Cardiac septum (tissue), 1 donor: ENCODE measurements at regions of chr15 and their contacts with region 1.

Region 1: DNA sequence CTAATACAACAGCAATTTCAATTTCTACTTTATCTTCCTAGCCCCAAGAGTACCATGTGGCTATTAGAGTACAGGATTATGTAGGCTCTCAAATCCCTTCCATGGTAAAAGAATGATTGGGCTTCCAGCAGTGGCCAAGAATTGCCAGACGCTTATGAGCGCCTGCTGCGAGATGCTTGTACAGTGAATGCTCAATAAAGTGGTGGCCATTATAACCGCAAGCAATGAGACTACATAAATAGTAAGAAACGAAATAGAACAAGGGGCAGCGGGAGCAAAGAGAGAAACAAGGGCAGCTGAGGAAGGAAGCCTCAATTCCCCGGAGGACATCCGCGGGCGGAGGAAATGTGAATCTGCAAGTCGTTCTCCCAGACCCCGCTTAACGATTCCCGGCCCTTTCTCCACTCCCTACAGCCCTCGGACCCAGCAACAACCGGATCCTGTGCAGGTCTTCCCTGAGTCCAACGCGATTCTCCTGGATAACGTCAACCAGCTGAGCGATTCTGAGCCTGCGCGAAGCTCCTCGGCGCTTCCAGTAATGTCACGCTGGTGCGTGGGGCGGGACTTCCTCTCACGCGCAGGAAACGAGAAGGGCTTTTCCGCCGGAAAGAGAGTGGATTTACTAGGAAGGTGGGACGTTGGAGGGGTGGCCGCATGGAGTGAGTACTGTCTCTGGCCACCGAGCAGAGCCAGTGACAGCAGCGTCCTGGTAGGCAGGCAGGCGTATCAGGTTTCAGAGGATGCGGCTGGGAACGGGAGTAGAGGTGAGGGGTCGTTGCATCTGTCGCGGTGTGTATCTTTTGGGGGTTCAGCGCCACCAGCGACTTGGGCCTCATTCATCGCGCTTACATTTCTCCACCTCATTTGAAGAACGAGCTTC is 40.5 kb upstream of the AP3B2 start:
- DNase-seq: peak; percentile 96

Region 2: DNA sequence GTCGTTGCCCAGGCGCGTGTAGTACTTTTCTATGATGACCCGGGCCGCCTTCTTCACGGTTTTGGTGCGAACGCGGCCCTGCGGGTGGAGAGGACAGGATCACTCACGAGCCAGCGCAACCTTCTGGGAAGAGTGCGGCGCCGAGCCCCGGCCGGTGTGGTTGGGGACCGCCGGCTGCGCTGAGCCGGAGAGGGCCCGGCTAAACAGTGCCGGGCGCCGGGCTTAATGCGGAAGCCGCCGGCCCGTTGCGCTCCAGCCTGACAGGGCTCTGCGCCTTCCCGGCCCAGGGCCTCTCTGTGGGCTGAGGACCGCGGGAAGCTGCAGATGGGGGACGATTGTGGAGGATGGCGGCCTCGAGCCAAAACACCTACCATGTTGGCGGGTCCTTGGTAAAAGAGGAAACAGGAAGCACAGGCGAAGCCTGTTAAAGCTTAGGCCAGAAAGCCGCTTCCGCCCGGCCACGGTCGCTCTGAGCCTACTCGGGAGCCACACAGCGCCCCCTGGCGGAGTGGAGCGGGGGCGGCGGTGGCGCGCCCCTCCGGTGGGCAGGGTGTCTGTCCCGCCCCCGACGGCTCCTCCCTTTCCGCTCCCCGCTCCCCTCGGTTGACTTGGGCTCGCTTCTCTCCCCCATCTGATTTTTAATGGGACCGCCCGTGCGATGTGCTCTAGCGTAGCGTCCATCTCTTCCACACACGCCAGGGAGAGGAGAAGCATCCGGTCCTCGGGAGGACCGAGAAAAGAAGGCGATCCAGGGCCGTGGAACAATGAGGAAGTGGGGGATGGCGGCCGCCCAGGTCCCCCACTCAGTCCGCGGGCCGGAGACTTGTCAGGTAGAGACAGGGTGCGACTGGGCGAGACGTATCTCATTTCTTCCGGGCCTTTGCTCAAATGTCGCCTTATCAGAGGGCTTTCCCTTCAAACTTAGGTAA is 209.9 kb before region 1 on chr15 and contains the start of gene RPS17:
- intact Hi-C with region 1: loop called (anchors 1 kb)
- DNase-seq: peak; percentile 98
- total RNA-seq, gene RPS17: 614 TPM

Region 3: DNA sequence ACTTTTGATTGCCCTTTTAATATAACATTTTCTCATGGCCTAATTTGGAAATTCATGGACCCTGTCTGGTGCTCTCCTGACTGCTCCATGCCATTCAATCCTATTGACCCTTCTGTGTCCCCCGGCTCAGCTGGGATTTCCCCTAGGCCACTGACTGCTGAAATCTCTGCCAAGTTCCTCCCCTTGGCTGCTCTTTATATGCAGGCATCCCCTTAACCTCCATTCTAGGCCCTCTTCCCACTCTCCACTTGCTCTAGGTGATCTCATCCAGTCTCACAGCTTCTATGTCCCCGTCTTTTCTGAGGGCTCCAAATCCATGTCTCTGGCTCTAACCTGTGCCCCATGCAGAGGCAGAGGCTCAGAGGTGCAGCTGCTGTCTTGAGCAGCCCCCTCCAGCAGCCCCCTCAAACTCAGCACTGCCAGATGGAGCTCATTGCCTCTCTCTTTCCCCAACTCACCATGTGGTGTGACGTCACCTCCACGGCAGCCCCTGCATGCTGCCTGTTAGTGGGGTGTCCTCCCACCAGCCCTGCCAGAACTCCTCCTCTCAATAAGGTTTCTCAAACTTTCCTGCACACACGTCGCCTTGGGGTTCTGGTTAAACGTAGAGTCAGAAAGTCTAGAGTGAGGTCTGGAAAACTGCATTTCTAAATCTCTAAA is 49.1 kb after region 1 on chr15:
- intact Hi-C with region 1: loop called (anchors 2 kb)
- DNase-seq: no peak